ENCODE measurements at regions of chr17 and their contacts with region 1.

Region 1: DNA sequence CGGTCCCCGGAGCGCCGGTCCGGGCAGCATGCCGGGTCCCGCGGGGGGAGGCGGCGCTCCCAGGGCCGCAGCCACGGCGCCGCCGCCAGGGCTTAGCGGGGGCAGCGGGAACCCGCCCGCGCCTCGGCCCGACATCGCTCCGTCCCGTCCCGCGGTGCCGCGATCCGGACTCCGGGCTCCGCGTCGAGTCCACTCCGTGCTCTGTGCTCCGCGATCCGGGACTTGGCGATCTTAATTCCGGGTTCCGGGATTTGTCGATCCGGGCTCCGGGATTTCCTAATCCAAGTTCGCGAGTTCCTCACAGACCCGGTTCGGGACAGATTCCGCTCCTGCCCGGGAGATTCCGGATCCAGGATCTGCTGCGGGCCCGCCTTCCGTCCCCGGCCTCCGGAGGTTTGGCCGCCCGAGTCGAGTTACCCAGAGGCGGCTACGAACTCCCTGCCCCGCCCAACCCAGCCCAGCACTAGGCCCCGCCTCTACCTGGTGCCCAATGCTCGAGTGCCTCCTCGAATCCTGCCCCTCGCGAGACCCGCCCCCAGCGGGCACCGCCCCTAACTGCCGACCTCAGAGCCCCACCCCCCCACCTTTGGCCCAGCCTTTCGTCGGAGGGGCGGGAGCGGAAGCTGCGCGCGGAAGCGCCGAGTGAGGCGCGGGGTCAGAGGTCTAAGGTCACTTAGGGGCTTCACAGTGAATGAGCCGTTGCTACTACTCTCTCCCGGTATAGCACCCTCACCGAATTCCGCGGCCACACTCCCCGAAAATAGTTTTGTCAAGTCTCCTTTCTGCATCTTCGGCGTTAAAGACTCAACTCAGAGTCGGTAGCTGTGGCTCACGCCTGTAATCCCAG is at the start of gene SMARCD2:
- DNase-seq: peak; percentile 98
- H3K4me3 ChIP-seq: peak within 1 kb of the TSS; percentile 99
- H3K27ac ChIP-seq: peak within 1 kb of the TSS; percentile 97
- H3K4me1 ChIP-seq: peaks cover 48% of the 10 kb centered on the region
- CTCF ChIP-seq: no peak
- total RNA-seq, gene SMARCD2: 112 and 120 TPM in 2 replicates

Region 2: DNA sequence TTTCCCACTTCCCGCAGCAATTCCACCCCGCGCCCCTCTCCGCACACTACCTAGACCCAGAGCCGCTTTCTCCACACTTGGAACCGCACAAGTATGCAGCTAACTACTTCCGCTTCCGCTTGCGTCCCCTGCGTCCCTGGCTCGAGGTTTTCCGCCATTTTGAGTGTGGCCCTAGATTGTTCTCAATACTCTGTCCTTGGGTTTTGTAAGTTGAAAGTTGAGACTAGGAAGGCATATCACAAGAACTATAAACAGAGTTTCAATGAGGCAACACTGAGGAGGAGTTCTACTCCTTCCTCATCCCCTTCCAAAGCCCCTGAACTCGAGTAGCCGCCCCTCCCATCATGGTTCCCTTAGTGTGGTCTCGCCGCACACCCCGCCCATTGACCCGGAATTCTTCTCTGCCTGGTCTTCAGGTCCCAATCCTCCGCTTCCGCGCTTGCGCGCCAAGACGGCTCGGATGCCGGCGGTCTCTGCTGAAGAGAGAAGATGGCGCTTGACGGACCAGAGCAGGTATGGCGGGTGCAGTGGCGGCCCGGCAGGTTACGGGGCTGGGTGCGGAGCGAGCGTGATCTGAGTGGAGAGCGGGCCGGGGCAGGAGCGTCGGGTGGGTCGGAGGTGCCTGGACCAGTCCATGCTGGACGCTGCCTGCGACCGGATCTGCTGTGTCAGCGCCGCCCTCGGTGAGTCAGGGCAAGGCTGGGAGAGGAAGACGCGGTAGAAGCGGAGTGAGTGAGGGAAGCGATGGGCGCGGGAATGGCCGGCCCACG is 15.6 kb before region 1 on chr17 and contains the starts of genes FTSJ3 and PSMC5:
- CTCF ChIA-PET with region 1: interaction called, 3 read pairs
- POLR2A ChIA-PET with region 1: interaction called, 20 read pairs
- intact Hi-C with region 1: loop called (anchors 1 kb)
- DNase-seq: peak; percentile 97
- H3K4me3 ChIP-seq: peak within 1 kb of the TSS; percentile 78
- H3K27ac ChIP-seq: peak within 1 kb of the TSS; percentile 67
- H3K4me1 ChIP-seq: peaks cover 23% of the 10 kb centered on the region
- CTCF ChIP-seq: peak; percentile 78
- total RNA-seq, gene FTSJ3: 32.4 and 43.0 TPM in 2 replicates
- total RNA-seq, gene PSMC5: 32.6 and 42.7 TPM in 2 replicates